Aorta (tissue), 5 donors: ENCODE measurements at regions of chr20 and their contacts with region 1.

Region 1: GRCh38 chr20:5788385-5788895 is 38.2 kb downstream of the SHLD1 start:
- DNase-seq: peak; percentile 81 to 82
- ATAC-seq: peak; percentile 92
- H3K4me3 ChIP-seq: no peak overlapping the region
- H3K27ac ChIP-seq: no peak overlapping the region
- H3K4me1 ChIP-seq: no peaks in the 10 kb centered on the region
- H3K27me3 ChIP-seq: no peaks in the 10 kb centered on the region

Region 2: DNA sequence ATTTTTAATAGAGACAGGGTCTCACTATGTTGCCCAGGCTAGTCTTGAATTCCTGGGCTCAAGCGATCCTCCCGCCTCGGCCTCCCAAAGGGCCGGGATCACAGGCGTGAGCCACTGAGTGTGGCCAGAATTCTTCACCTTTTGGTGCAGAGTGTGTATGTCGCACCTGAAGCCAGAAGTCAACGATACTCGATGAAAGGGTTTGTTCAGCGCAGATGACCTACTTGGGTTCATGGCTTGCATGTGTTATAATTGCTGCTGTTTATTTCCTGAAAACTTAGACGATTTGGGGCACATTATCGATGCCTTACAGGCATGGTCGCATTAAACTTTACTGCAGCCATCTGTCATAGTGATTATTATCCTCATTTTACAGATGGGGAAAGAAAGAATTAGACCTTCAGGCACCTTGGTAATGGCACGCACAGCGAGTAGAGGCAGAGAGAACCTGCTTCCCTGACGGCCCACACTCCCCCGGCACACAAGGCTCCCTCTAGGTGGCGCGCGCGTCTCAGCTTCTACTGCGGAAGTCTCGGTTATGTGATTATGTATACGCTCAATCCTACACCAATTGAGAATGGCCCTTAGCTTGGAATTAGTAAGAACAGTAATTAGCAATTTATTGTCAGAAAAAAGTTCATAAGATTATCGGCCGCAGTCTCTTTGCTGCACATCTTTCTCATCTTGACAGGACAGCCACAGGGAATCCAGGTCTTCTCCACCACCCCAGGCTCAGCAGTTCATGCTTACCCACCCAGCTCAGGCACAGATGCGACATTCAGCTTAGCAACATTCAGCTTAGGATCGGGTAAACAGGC is 258.9 kb before region 1 on chr20:
- intact Hi-C with region 1: loop called (anchors 1 kb)
- DNase-seq: peak; percentile 88 to 95
- ATAC-seq: peak; percentile 95
- H3K4me3 ChIP-seq: no peak overlapping the region
- H3K27ac ChIP-seq: no peak overlapping the region
- H3K4me1 ChIP-seq: no peaks in the 10 kb centered on the region
- H3K27me3 ChIP-seq: no peaks in the 10 kb centered on the region

Region 3: DNA sequence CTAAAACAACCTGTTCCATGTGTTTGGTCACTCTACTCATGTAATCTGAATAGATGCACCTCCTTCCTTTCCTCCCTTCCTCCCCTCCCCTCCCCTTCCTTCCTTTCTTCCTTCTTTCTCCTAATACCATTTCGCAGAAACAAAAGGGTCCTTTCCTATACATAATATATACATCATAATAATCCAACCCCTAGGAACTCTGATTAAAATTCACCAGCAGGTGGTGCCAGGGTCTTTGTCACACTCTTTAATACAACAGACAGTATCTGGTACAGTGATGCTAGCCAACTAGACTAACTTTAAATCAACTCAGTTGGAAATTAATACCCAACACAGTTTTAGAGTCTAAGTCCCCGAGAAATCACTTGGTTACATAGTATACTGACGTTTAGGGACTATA is 219.4 kb before region 1 on chr20:
- intact Hi-C with region 1: loop called in 1 of 2 experiments (anchors 10 kb)
- DNase-seq: no peak
- ATAC-seq: no peak
- H3K4me3 ChIP-seq: no peak overlapping the region
- H3K27ac ChIP-seq: no peak overlapping the region
- H3K4me1 ChIP-seq: no peaks in the 10 kb centered on the region
- H3K27me3 ChIP-seq: no peaks in the 10 kb centered on the region

Region 4: GRCh38 chr20:5731753-5732366 is 56.6 kb before region 1 on chr20:
- intact Hi-C with region 1: no loop called
- DNase-seq: no peak
- ATAC-seq: no peak
- H3K4me3 ChIP-seq: no peak overlapping the region
- H3K27ac ChIP-seq: no peak overlapping the region
- H3K4me1 ChIP-seq: no peaks in the 10 kb centered on the region
- H3K27me3 ChIP-seq: no peaks in the 10 kb centered on the region

Region 5: DNA sequence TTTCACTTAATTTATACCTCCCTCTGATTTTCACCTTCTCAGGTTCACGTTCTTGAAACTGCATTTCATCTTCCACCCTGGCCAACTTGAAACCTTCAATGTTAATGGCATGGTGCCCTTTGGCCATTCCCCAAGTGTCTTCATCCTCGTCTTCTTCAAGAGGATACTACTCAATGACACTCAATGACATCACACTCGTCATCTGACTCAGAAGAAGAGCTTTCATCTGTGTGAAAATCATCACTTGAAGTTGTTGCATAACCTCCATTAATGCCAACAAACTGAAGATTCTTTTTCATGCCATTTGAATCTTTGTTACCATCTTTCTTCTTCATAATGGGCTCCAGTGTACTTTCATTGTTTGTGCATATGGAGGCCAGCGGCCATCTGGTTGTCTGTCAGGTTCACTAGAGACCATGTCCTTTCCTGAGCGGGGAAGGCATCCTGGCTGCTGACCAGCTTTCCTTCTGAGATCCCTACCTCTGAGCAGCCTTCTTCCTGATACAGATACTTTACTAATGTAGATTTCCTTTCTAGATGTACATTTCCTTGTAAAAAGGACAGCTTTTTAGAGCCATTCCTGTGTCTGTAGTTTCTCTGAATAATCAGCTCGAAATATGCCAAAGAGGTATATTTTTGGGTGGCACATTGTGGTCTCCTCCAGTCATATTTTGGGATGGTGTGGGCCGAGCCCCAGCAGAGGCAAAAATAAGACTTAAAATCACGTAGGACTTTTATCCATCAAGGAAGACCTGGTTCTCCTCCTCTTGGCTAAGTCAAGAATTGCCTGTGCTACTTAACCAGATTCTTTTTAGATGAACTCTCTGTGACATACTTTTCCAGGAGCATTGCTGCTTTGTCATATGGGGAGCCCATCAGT is 140.6 kb after region 1 on chr20:
- intact Hi-C with region 1: no loop called
- DNase-seq: no peak
- ATAC-seq: no peak
- H3K4me3 ChIP-seq: no peak overlapping the region
- H3K27ac ChIP-seq: no peak overlapping the region
- H3K4me1 ChIP-seq: no peaks in the 10 kb centered on the region
- H3K27me3 ChIP-seq: no peaks in the 10 kb centered on the region